PC-3 (cell line): ENCODE measurements at regions of chr7 and their contacts with region 1.

Region 1: DNA sequence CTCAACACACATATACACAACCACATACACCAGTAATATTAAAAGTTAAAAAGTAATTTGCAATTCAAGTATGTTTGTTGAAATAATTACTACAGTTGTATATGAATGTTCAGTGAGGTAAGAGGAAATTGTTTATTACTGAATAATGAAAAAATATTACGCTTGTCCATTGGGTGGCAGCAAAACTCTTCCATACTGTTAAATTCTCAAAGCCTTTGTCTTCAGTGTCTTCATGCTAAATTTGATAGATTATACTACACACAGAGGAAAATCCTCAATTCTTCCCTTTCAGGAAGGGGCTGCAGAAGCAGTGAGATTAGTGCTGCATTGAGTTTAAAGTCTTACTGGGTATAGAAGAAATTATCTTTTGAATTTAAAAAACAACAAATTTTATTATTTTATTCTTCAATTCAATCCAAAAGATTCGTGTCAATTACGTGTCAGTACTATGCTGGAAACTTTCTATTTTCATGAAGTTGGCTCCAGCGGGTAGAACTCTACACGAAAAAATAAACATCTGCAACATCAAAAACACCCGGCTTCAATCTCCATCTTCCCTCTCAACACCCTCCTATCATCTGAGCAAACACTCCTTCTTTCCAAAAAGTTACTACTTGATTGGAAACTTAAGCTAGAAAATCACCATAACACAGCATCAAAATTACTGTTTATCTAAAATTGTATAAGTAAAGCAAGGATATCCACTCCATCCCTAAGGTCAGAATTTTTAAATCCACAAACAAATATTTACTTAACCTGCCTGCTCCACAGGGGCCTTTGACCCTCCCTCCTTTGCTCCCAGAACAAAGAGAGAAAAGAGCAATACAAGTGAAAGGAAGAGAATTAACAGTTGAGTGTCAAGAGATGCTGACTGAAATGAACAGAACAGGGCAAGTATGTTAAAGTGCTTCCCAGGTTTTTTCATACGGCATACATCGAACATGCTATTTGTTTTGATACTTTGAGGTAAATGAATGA is 37.0 kb upstream of the TES start:
- DNase-seq: peak; percentile 83
- ATAC-seq: peak; percentile 37
- H3K4me3 ChIP-seq: peak overlapping the region; percentile 48
- H3K27ac ChIP-seq: peak overlapping the region; percentile 55
- H3K4me1 ChIP-seq: peaks cover 35% of the 10 kb centered on the region
- H3K27me3 ChIP-seq: no peaks in the 10 kb centered on the region
- CTCF ChIP-seq: peak; percentile 72

Region 2: DNA sequence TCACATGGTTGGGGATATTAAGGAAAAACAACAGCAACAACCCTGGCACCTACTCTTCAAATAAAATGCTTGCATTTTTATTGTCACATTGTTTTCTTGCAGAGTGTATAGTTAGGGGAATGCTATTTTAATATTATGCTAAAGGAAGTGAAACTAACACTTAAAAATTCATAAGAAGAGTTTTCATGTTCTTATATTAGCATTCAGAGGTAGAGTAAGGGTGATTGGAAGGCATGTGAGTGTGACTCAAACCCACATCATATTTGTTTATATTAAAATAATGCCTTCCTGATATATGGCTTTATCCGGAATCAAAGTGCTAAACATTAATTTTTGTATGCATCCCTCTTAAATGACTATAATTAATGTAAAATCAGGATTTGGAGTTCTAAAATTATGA is 22.8 kb before region 1 on chr7:
- CTCF ChIA-PET with region 1: no interaction called
- POLR2A ChIA-PET with region 1: no interaction called
- intact Hi-C with region 1: loop called (anchors 1 kb)
- DNase-seq: peak; percentile 25
- ATAC-seq: peak; percentile 67
- H3K4me3 ChIP-seq: no peak overlapping the region
- H3K27ac ChIP-seq: peak overlapping the region; percentile 24; the same call in 1 of the 2 replicates
- H3K4me1 ChIP-seq: peaks cover 36% of the 10 kb centered on the region
- H3K27me3 ChIP-seq: no peaks in the 10 kb centered on the region
- CTCF ChIP-seq: no peak

Region 3: DNA sequence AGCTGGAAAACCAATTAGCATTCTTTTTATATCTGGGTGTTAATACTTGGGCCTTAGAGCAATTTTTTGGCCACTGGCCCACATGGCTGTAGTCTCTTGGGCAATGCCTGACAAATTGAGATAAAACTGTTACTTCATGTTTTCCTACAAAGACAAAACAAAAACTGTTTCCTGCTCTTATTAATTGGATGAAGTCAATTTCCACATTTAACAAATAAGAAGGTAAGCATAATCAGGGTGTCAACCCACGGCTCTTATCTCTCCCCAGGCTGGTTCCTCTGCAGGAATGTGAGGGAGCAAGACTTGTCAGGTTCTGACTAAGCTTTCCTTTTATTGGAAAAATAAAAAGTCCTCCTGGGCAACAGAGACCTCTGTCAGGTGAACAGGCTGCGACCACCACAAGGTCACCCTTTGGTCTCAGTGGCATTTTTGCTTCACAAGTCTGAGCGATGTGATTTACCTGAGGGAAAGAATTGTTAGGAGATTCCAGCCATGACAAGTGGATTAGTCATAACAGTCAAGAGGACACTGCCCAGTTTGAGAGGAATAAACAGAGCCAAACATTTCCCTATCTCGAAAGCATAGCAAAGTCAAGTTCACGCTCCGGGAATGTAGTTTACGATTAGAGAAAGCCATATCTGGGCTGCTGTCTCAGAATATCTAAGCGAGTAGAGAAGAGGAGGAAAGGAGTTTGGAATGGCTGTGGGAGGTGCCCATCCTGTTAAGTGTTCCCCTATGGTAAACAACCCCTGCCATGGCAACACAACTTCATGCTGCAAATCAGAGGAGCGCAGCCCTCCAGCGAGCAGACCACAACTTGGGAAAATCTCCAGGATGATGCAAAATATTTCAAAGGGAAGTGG is 181.4 kb after region 1 on chr7:
- CTCF ChIA-PET with region 1: no interaction called
- POLR2A ChIA-PET with region 1: interaction called, 24 read pairs
- intact Hi-C with region 1: no loop called
- DNase-seq: peak; percentile 96
- ATAC-seq: peak; percentile 85
- H3K4me3 ChIP-seq: peak overlapping the region; percentile 51; the same call in 1 of the 2 replicates
- H3K27ac ChIP-seq: peak overlapping the region; percentile 91
- H3K4me1 ChIP-seq: peaks cover 51% of the 10 kb centered on the region
- H3K27me3 ChIP-seq: no peaks in the 10 kb centered on the region
- CTCF ChIP-seq: no peak

Region 4: GRCh38 chr7:116588641-116589594 is 415.6 kb after region 1 on chr7:
- CTCF ChIA-PET with region 1: interaction called, 4 read pairs
- POLR2A ChIA-PET with region 1: no interaction called
- intact Hi-C with region 1: loop called (anchors 1 kb)
- DNase-seq: peak; percentile 88
- ATAC-seq: peak; percentile 49
- H3K4me3 ChIP-seq: no peak overlapping the region
- H3K27ac ChIP-seq: peak overlapping the region; percentile 3; the same call in 1 of the 2 replicates
- H3K4me1 ChIP-seq: peaks cover 26% of the 10 kb centered on the region
- H3K27me3 ChIP-seq: no peaks in the 10 kb centered on the region
- CTCF ChIP-seq: peak; percentile 87